ENCODE measurements at regions of chr18 and their contacts with region 1.

Region 1: DNA sequence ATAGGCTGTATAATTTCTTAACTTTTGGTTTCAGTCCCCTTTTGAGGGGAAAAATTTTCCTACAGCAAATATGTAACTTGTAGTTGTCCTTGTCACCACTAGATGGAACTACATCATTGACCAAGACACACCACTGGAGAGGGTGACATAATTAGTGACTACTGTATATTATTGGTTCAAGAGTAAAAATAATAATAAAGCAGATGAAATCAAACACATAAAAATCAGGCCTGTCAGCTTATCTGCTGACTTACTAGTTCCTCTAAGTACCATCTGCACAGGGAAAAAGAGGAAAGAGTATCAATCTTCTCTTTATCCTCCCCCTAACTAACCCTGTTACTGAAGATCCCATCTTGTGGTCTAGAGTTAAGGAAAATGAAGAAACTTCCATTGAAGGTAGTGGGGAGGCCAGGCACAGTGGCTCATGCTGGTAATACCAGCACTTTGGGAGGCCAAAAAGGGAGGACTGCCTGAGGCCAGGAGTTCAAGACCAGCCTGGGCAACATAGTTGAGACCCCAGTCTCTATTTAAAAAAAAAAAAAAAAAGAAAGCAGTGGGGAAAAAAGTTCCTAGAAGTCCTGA is 29.6 kb upstream of the ENOSF1 start:
- DNase-seq: no peak
- ATAC-seq: peak; percentile 90
- H3K4me3 ChIP-seq: no peak overlapping the region
- H3K27ac ChIP-seq: no peak overlapping the region
- H3K4me1 ChIP-seq: no peaks in the 10 kb centered on the region
- H3K27me3 ChIP-seq: no peaks in the 10 kb centered on the region
- CTCF ChIP-seq: peak; percentile 80

Region 2: GRCh38 chr18:805008-805754 is 63.2 kb after region 1 on chr18:
- intact Hi-C with region 1: loop called (anchors 10 kb)
- DNase-seq: no peak
- ATAC-seq: peak; percentile 36
- H3K4me3 ChIP-seq: peak overlapping the region; percentile 7
- H3K27ac ChIP-seq: peak overlapping the region; percentile 14
- H3K4me1 ChIP-seq: peaks cover 20% of the 10 kb centered on the region
- H3K27me3 ChIP-seq: no peaks in the 10 kb centered on the region
- CTCF ChIP-seq: no peak

Region 3: GRCh38 chr18:830315-830901 is 88.4 kb after region 1 on chr18:
- intact Hi-C with region 1: loop called (anchors 5 kb)
- DNase-seq: no peak
- ATAC-seq: peak; percentile 78
- H3K4me3 ChIP-seq: no peak overlapping the region
- H3K27ac ChIP-seq: peak overlapping the region; percentile 55
- H3K4me1 ChIP-seq: peaks cover 4% of the 10 kb centered on the region
- H3K27me3 ChIP-seq: no peaks in the 10 kb centered on the region
- CTCF ChIP-seq: no peak